Naive thymus-derived CD4-positive, alpha-beta T cell (primary cell): ENCODE measurements at regions of chr18 and their contacts with region 1.

Region 1: GRCh38 chr18:26621161-26622026 is 73.0 kb upstream of the KCTD1 start:
- DNase-seq: peak in 1 of 9 donors; percentile 23
- ATAC-seq: peak; percentile 62
- H3K4me3 ChIP-seq: no peak overlapping the region
- H3K4me3 Mint-ChIP-seq: peak overlapping the region in 3 of 10 donors; percentile 46 to 65 (median 49)
- H3K27ac ChIP-seq: no peak overlapping the region
- H3K27ac Mint-ChIP-seq: no peak overlapping the region
- H3K4me1 ChIP-seq: no peaks in the 10 kb centered on the region
- H3K4me1 Mint-ChIP-seq: no peaks in the 10 kb centered on the region
- H3K27me3 ChIP-seq: no peaks in the 10 kb centered on the region
- H3K27me3 Mint-ChIP-seq: peaks cover 2 to 26% (median 20%) of the 10 kb centered on the region in 5 donors

Region 2: GRCh38 chr18:26342648-26343047 is 278.7 kb before region 1 on chr18:
- CTCF ChIA-PET with region 1: no interaction called
- POLR2A ChIA-PET with region 1: no interaction called
- intact Hi-C with region 1: no loop called
- DNase-seq: no peak
- ATAC-seq: no peak
- H3K4me3 ChIP-seq: no peak overlapping the region
- H3K4me3 Mint-ChIP-seq: no peak overlapping the region
- H3K27ac ChIP-seq: no peak overlapping the region
- H3K27ac Mint-ChIP-seq: no peak overlapping the region
- H3K4me1 ChIP-seq: no peaks in the 10 kb centered on the region
- H3K4me1 Mint-ChIP-seq: peaks cover 0 to 1% (median 0%) of the 10 kb centered on the region in 7 donors
- H3K27me3 ChIP-seq: no peaks in the 10 kb centered on the region
- H3K27me3 Mint-ChIP-seq: no peaks in the 10 kb centered on the region

Region 3: DNA sequence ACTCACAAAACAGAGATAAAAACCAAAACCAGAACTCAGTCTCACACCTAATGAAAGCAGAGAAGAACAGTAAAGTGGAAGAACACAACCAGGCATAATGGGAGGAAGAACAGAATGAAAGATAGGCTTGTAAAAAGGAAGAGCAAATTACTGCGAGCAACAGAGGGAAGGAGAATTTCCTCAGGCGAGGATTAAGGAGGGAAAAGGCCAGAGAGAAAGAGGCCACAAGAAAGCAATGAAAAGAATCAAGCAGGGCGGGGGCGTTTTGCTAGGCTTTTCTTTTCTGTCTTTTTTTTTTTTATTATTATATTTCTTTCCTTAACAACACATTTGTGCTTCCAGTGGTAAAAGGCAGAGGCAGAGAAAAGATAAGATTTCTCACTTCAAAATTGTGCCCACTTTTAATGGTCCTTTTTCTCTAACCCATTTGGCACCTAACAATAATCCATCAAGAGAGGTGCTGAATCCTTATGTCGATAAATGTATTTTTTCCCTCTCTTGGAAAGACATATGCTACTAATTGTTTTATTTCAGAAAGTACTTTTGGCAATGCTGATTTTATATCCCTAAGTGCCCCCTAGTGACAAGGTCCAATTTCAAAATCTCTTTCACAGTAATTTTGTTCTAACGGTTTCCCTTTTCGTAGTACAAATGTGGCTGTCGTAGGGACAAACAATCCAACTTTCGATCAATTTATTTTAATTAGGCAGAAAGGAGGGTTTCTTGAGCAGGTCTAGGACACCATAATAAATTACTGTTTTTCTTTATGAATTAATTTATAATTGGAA is 382.9 kb after region 1 on chr18:
- CTCF ChIA-PET with region 1: no interaction called
- POLR2A ChIA-PET with region 1: no interaction called
- intact Hi-C with region 1: loop called in 1 of 2 experiments (anchors 5 kb)
- DNase-seq: no peak
- ATAC-seq: no peak
- H3K4me3 ChIP-seq: no peak overlapping the region
- H3K4me3 Mint-ChIP-seq: no peak overlapping the region
- H3K27ac ChIP-seq: no peak overlapping the region
- H3K27ac Mint-ChIP-seq: no peak overlapping the region
- H3K4me1 ChIP-seq: no peaks in the 10 kb centered on the region
- H3K4me1 Mint-ChIP-seq: peaks cover 0 to 2% (median 0%) of the 10 kb centered on the region in 7 donors
- H3K27me3 ChIP-seq: no peaks in the 10 kb centered on the region
- H3K27me3 Mint-ChIP-seq: no peaks in the 10 kb centered on the region